A673 (cell line): ENCODE measurements at regions of chr2 and their contacts with region 1.

Region 1: GRCh38 chr2:105567996-105568494 is 169.2 kb upstream of the FHL2 start:
- DNase-seq: no peak
- H3K4me3 ChIP-seq: no peak overlapping the region
- H3K27ac ChIP-seq: no peak overlapping the region
- H3K4me1 ChIP-seq: no peaks in the 10 kb centered on the region
- H3K27me3 ChIP-seq: peaks cover 11% of the 10 kb centered on the region
- CTCF ChIP-seq: no peak

Region 2: DNA sequence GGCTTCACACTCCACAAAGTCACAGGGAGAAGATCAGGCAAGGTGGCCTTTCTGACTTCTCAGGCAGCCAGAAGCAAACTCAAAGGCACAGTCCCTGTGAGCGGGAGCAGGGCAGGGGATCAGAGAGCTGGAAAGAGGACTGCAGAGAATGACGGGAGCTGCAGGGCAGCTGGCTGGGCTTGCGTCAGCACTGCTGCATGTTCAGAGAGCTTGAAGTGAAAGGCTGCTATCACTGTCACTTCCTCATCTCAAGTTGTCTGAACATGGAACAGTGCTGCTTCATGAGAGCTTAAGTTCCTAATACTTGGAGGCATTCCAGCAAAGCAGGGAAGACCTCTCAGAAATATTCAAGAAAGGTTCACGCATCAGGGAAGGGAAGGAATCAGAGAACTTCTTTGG is 258.9 kb before region 1 on chr2:
- CTCF ChIA-PET with region 1: interaction called, 16 read pairs
- POLR2A ChIA-PET with region 1: no interaction called
- intact Hi-C with region 1: no loop called
- DNase-seq: no peak
- H3K4me3 ChIP-seq: no peak overlapping the region
- H3K27ac ChIP-seq: no peak overlapping the region
- H3K4me1 ChIP-seq: no peaks in the 10 kb centered on the region
- H3K27me3 ChIP-seq: no peaks in the 10 kb centered on the region
- CTCF ChIP-seq: no peak